Heart right ventricle (tissue), 16 donors: ENCODE measurements at regions of chr7 and their contacts with region 1.

Region 1: DNA sequence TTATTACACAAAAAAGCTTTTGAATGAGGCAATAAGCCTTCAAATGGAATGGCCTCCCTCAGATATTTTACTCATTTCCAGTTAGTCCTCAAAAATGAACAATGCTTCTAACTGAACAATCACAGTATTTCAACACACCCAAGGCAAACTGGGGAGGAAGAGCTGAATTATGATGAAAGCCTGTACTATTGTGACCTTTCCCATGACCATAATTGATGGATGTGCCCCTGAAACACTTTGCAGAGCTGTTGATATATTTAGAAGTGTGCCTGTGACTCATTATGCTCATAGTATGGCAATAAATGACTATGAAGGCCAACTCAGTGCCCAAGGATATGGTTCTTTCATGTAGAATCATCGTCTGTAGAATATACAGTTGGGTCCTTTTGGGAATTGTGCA is 248.1 kb downstream of the AHR start:
- DNase-seq: no peak
- ATAC-seq: peak in 4 of 8 donors; percentile 29 to 88 (median 38)
- H3K4me3 ChIP-seq: no peak overlapping the region
- H3K27ac ChIP-seq: peak overlapping the region in 3 of 10 donors; percentile 5 to 59 (median 26)
- H3K4me1 ChIP-seq: peaks cover 0 to 32% (median 8%) of the 10 kb centered on the region in 9 donors
- H3K27me3 ChIP-seq: no peaks in the 10 kb centered on the region
- CTCF ChIP-seq: no peak

Region 2: GRCh38 chr7:17227766-17228490 is 318.7 kb before region 1 on chr7:
- intact Hi-C with region 1: no loop called
- DNase-seq: no peak
- ATAC-seq: no peak
- H3K4me3 ChIP-seq: no peak overlapping the region
- H3K27ac ChIP-seq: no peak overlapping the region
- H3K4me1 ChIP-seq: peaks cover 0 to 22% (median 12%) of the 10 kb centered on the region in 9 donors
- H3K27me3 ChIP-seq: no peaks in the 10 kb centered on the region
- CTCF ChIP-seq: no peak

Region 3: DNA sequence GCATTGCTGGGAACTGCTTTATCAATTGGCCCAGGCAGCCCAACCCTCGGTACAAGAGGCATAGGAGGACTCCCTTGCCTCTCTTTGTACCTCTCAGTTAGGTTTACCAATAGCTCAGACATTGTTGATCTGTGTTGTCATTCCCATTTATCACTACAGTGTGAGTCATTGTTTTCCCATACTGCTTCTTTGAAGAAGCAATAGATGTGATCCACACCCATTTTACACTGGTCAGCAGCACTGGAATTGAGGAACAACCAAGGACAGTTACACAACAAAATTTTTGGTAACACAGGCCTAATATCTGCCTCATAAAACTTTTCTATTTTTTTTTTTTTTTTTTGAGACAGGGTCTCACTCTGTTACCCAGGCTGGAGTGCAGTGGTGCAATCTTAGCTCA is 86.5 kb after region 1 on chr7:
- intact Hi-C with region 1: loop called in 1 of 10 experiments (anchors 10 kb)
- DNase-seq: no peak
- ATAC-seq: peak in 1 of 8 donors; percentile 70
- H3K4me3 ChIP-seq: no peak overlapping the region
- H3K27ac ChIP-seq: no peak overlapping the region
- H3K4me1 ChIP-seq: no peaks in the 10 kb centered on the region
- H3K27me3 ChIP-seq: no peaks in the 10 kb centered on the region
- CTCF ChIP-seq: no peak